Calu3 (cell line): ENCODE measurements at regions of chr3 and their contacts with region 1.

Region 1: DNA sequence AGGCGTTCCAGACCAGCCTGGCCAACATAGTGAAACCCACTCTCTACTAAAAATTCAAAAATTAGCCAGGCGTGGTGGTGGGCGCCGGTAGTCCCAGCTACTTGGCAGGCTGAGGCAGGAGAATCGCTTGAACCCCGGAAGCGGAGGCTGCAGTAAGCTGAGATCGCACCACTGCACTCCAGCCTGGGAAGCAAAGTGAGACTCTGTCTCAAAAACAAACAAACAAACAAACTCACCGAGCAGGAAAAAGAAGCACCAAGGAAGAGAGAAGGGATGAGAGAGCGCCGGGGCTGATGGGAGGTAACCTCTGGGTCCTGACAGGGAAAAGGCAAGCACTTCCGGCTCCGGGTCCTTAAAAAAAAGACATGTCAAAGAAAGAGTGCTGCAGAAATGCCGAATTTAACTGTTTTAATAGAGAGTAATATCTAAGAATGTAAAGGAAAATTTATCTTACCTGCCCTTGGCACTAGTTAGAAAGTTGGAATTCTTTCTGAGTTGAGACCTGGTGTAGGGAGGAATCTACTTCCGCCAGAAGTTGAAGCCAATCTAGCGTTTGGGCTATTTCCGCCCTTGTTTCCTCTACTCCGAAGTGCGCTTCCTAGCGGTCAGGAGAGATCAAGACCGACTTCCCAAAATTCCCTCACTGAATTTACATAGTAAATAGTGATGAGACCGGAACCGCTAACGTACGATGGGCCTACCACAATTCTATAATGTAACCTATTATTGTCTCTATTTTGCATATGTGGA is 29.1 kb downstream of the EFCAB12 start:
- DNase-seq: peak; percentile 87
- H3K4me3 Mint-ChIP-seq: peak overlapping the region; percentile 89
- H3K27ac Mint-ChIP-seq: peak overlapping the region; percentile 88
- H3K4me1 Mint-ChIP-seq: peaks cover 25% of the 10 kb centered on the region
- H3K27me3 Mint-ChIP-seq: no peaks in the 10 kb centered on the region
- CTCF ChIP-seq: peak; percentile 72

Region 2: DNA sequence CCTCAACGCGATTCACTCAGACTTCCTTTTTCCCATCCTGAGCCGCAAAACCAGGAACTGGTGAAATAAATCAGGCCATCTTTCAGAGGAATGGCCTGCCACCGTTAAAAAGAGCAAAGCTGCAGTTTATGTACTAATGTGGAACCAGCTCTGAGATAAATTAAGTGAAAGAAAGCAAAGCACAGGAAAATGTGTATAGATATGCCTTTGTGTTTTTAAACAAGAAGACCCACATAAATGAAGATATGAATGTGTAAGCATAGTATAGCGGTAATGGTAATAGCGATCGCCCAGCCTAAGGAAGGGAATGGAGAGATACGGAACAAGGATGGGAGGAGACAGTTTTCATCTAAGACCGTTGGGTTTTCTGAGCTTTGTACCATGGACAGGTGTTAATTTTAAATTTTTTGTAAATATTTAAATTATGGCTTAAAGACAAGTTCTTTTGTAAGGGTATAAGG is 717.9 kb before region 1 on chr3:
- CTCF ChIA-PET with region 1: no interaction called
- intact Hi-C with region 1: no loop called
- DNase-seq: no peak
- H3K4me3 Mint-ChIP-seq: peak overlapping the region; percentile 81
- H3K27ac Mint-ChIP-seq: peak overlapping the region; percentile 96
- H3K4me1 Mint-ChIP-seq: peaks cover 10% of the 10 kb centered on the region
- H3K27me3 Mint-ChIP-seq: no peaks in the 10 kb centered on the region
- CTCF ChIP-seq: no peak

Region 3: DNA sequence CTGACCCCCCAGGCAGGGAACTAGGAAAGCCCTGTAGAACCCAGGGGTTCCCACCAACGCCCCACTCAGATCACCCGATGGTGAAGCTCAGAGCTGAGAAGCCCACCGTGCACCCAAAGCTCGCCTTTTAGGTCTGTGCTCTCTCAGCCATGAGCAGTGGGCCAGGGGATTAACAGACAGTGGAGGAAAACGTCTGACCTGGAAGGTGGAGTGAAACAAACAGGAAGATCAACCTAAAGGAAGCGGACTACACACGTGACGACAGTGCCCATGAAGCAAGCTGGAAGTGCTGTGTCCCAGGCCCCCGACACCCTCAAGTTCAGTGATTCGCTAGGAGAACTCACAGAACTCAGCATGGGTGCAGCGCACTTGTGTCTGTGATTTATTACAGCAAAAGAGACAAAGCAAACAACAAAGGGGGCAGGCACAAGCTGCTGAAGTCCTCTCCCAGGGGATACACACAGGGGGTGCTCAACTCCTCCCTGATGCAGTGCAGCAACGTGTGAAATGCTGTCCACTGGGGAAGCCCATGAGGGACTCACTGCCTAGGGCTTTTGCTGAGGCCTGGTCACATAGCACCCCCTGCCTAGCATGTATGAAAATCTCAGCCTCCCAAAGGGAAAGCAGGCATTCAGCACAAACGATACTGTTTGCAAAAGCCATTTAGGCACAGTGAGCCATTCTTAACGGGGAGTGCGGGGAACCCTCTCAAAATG is 448.9 kb before region 1 on chr3:
- CTCF ChIA-PET with region 1: no interaction called
- intact Hi-C with region 1: no loop called
- DNase-seq: peak; percentile 34
- H3K4me3 Mint-ChIP-seq: no peak overlapping the region
- H3K27ac Mint-ChIP-seq: no peak overlapping the region
- H3K4me1 Mint-ChIP-seq: no peaks in the 10 kb centered on the region
- H3K27me3 Mint-ChIP-seq: peaks cover 35% of the 10 kb centered on the region
- CTCF ChIP-seq: no peak

Region 4: GRCh38 chr3:129413687-129414506 is 14.6 kb after region 1 on chr3:
- CTCF ChIA-PET with region 1: interaction called, 16 read pairs
- intact Hi-C with region 1: no loop called
- DNase-seq: peak; percentile 66
- H3K4me3 Mint-ChIP-seq: peak overlapping the region; percentile 17
- H3K27ac Mint-ChIP-seq: peak overlapping the region; percentile 70
- H3K4me1 Mint-ChIP-seq: peaks cover 37% of the 10 kb centered on the region
- H3K27me3 Mint-ChIP-seq: no peaks in the 10 kb centered on the region
- CTCF ChIP-seq: no peak